GM10248 (cell line): ENCODE measurements at regions of chr17 and their contacts with region 1.

Region 1: DNA sequence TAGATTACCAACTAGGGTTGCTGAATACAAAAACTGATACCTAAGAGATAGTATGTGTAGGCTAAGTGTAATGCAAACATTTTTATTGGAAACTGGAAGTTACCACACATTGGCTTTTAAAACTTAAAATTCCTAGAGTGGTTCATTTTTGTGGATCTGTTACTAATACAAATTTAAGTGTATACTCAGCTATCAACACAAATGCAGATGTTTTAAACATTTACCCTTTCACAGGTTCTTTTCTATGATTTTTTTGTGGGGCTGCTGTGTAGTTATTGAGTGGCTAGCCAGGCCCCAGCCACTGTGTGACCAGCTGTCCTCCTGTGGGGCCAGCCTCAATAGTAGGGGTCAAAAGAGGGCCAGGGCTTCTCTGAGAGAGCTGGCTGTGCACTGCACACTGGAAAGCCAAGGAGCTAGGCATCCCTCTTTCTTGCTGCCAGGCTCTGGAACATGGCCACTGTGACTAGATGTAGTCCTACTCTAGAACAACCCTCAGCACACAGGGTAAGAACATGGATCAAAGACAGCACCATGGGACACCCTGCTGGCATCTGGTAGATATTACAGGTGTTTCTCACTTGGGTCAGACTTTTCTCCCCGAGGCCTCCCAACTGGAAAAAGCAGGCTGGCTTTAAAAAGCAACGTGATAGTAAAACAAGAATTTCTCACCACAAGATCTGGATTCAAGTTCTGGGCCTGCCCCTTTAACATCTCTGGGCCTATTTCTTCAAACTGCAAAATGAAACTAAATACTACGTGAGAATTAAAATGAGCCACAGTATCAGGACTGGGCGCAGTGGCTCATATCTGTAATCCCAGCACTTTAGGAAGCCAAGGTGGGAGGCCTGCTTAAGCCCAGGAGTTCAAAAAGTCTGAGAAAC is 7.3 kb upstream of the VEZF1 start:
- DNase-seq: peak; percentile 64
- CTCF ChIP-seq: peak; percentile 62

Region 2: GRCh38 chr17:57197466-57198071 is 797.7 kb before region 1 on chr17:
- CTCF ChIA-PET with region 1: no interaction called
- POLR2A ChIA-PET with region 1: no interaction called
- DNase-seq: no peak
- CTCF ChIP-seq: no peak

Region 3: GRCh38 chr17:57849874-57850754 is 145.2 kb before region 1 on chr17 and contains the start of gene MRPS23:
- CTCF ChIA-PET with region 1: interaction called, 478 read pairs
- POLR2A ChIA-PET with region 1: interaction called, 9 read pairs
- DNase-seq: peak; percentile 96
- CTCF ChIP-seq: no peak

Region 4: DNA sequence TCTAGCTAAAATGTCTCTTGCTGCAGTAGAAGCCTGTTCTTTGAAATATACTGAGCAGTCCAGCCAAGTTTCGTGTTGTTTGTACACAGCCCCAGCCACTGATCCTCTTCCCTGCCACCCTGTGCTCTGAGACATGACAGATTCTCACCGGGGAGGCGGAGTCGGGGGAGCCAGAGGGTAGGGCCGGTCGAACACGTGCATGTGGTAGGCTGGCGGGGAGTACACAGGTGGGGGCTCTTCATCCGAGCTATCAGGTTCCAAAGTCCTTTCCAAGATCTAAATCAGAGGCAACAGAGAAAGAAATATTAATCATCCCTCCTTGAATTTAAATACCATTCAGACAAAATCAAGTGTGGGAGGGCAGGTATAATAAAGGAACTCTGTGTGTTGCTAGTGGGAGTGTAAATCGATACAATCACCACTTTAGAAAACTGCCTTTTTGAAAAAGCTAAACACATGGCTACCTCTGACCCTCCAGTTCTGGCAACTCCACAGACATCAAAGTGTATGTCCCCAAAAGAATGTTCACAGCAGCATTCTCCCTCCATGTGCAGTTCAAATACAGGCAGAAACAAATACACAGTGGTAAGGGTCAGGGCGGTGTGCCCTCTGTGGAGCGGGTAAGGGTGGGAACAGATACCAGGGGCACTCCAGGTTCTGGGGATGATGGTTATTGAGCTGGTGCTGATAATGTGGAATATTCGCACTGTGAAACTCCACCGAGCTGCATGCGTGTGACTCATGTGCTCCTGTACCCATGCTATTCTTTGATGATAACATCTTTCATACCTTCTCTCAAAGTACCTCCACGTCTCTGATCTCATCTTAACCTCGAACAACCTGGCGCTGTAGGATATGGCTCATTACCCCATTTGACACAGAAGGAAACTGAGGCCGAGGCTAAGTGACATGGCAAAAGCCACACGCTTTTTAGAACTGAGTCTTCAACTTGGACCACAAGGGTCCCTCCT is 115.6 kb before region 1 on chr17:
- CTCF ChIA-PET with region 1: interaction called, 12 read pairs
- POLR2A ChIA-PET with region 1: no interaction called
- DNase-seq: no peak
- CTCF ChIP-seq: no peak

Region 5: GRCh38 chr17:57902800-57903759 is 92.2 kb before region 1 on chr17:
- CTCF ChIA-PET with region 1: interaction called, 11 read pairs
- POLR2A ChIA-PET with region 1: interaction called, 4 read pairs
- DNase-seq: peak; percentile 86
- CTCF ChIP-seq: no peak

Region 6: GRCh38 chr17:57946798-57947358 is 48.4 kb before region 1 on chr17:
- CTCF ChIA-PET with region 1: interaction called, 13 read pairs
- POLR2A ChIA-PET with region 1: no interaction called
- DNase-seq: peak; percentile 76
- CTCF ChIP-seq: no peak

Region 7: GRCh38 chr17:57980522-57980921 is 14.8 kb before region 1 on chr17:
- CTCF ChIA-PET with region 1: interaction called, 24 read pairs
- POLR2A ChIA-PET with region 1: no interaction called
- DNase-seq: no peak
- CTCF ChIP-seq: no peak

Region 8: DNA sequence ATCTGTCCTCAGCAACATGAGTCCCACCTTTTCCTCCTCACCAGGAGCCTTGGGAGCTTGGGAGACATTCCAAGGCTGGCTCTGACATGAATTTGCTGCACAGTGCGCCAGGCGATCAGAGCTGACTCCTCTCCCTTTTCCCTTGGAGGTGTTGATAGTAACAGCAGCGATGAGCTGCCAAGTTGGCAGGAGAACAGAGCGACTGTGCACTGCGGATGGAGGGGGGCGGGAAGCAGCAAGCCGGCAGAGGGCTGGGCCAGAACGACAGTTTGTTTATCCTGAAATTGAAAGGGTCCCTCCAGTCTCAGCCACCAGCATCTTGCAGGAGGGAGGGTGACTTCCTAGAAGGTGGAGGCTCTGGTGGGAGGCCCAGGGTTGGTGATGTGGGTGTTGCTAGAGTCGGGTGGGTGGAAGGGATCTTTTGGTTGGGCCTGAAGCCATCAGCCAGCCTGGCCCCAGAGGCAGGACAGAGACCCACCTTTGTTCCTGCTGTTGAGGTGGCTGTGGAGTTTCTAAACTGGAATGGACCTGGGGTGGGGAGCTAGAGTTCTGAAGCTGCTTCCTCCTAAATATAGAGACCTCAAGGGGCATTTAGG is 65.4 kb after region 1 on chr17:
- CTCF ChIA-PET with region 1: no interaction called
- POLR2A ChIA-PET with region 1: no interaction called
- DNase-seq: no peak
- CTCF ChIP-seq: no peak